ENCODE measurements at regions of chr1 and their contacts with region 1.

Region 1: GRCh38 chr1:26999440-26999987 is 6.0 kb downstream of the TRNP1 start:
- DNase-seq: peak in 6 of 7 donors; percentile 58 to 87 (median 70)
- H3K4me3 ChIP-seq: no peak overlapping the region
- H3K27ac ChIP-seq: peak overlapping the region in 3 of 5 donors; percentile 49 to 87 (median 57)
- H3K4me1 ChIP-seq: peaks cover 0 to 18% of the 10 kb centered on the region in 2 donors
- H3K27me3 ChIP-seq: no peaks in the 10 kb centered on the region
- CTCF ChIP-seq: no peak
- POLR2A ChIP-seq: no peak

Region 2: DNA sequence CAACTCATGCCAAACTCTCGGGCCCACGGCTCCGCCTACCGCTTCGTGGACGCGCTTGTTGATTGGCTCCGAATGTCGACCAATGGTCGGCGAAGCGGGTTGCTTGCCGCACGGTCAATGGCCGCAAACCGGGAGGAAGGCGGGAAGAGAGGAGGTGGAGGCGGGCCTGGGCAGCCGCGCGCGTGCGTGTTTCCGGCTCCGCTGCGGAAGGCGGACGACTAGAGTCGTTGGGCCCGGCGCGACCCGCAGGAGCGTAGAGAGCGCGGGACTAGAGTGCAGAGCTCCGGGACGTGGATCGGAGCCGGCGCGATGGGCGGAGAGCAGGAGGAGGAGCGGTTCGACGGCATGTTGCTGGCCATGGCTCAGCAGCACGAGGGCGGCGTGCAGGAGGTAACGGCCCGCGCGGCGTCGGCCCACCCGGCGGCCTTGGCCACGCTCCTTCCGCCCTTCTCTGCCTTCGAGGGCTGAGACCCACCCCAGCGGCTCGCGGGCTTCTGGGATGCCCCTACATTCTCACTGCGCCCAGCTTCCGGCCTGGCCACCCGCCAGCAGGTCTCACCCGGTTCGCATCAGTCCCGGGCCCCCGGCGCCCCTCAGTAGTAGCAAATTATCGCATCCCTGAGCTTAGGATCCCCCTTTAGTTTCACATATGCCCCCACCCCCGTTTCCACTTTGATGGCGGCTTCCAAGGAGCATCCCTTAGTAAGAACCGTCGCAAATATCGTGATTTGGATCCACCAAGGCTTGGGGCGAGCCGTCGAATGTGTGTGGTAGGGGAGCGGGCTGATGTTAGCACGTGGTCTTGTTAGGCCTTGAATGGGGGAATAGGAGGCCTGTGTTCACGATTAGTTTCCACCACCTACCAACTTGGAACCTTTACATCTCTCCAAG is 77.7 kb before region 1 on chr1 and contains the start of gene NUDC:
- intact Hi-C with region 1: no loop called
- DNase-seq: peak; percentile 97 to 99 (median 98)
- H3K4me3 ChIP-seq: peak within 1 kb of the TSS; percentile 20 to 77 (median 60)
- H3K27ac ChIP-seq: peak within 1 kb of the TSS; percentile 29 to 93 (median 88)
- H3K4me1 ChIP-seq: peaks cover 17 to 33% of the 10 kb centered on the region in 2 donors
- H3K27me3 ChIP-seq: no peaks in the 10 kb centered on the region
- CTCF ChIP-seq: no peak
- POLR2A ChIP-seq: peak; percentile 78 to 93
- total RNA-seq, gene NUDC: 63.3 to 232 (median 98.6) TPM

Region 3: DNA sequence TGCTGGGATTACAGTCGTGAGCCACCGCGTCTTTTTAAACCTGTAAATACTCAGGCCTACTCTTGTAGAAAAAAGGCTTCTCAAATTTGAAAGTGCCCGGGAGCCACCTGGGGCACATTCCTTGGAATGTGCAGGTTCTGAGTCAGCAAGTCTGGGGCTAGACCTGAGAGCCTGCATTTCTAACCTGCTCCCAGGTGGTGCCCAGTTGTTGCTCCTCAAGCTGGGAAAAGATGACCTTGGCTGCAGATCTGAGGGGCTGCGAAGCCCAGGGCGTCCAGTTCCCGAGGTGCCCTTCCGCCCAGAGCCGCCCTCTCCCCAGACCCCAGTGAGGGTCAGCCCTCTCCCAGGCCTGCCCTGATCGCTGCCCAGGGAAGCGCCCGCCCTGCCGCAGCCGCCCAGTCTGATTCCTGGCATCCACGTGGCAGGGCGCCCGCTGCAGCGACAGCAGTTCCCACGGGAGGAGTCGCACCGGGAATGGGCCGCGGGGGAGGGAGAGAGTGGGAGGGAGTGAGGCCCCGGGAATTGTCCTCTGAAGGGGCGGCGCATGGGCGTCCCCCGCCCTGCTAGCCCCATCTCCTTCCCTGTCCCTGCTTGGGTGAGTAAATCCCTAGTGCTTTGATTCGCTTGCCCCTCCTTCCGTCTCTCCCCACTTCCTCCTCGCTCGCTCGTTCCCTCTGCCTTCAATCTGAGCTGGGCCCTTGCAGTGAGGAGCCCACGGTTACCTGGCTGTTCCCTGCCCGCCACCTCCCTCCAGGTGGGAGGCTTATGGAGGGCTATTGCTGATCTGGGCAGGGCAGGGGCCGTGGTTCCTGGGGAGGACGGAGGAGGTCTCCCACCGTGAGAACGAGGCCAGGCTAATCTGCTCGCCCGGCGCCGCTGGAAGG is 32.0 kb after region 1 on chr1:
- intact Hi-C with region 1: loop called in 1 of 2 experiments (anchors 5 kb)
- DNase-seq: peak; percentile 77 to 94 (median 88)
- H3K4me3 ChIP-seq: peak overlapping the region in 1 of 4 donors; percentile 56
- H3K27ac ChIP-seq: peak overlapping the region in 3 of 5 donors; percentile 56 to 83 (median 72)
- H3K4me1 ChIP-seq: peaks cover 0 to 27% of the 10 kb centered on the region in 2 donors
- H3K27me3 ChIP-seq: no peaks in the 10 kb centered on the region
- CTCF ChIP-seq: no peak
- POLR2A ChIP-seq: peak in 1 of 2 donors; percentile 22

Region 4: GRCh38 chr1:27097484-27097917 is 98.0 kb after region 1 on chr1:
- intact Hi-C with region 1: loop called in 1 of 2 experiments (anchors 5 kb)
- DNase-seq: peak; percentile 77 to 92 (median 83)
- H3K4me3 ChIP-seq: no peak overlapping the region
- H3K27ac ChIP-seq: no peak overlapping the region
- H3K4me1 ChIP-seq: peaks cover 6 to 14% of the 10 kb centered on the region in 2 donors
- H3K27me3 ChIP-seq: no peaks in the 10 kb centered on the region
- CTCF ChIP-seq: peak; percentile 97 to 99 (median 98)
- POLR2A ChIP-seq: no peak

Measured in adrenal gland (tissue), 19 donors.